BJ (cell line): ENCODE measurements at regions of chr17 and their contacts with region 1.

Region 1: DNA sequence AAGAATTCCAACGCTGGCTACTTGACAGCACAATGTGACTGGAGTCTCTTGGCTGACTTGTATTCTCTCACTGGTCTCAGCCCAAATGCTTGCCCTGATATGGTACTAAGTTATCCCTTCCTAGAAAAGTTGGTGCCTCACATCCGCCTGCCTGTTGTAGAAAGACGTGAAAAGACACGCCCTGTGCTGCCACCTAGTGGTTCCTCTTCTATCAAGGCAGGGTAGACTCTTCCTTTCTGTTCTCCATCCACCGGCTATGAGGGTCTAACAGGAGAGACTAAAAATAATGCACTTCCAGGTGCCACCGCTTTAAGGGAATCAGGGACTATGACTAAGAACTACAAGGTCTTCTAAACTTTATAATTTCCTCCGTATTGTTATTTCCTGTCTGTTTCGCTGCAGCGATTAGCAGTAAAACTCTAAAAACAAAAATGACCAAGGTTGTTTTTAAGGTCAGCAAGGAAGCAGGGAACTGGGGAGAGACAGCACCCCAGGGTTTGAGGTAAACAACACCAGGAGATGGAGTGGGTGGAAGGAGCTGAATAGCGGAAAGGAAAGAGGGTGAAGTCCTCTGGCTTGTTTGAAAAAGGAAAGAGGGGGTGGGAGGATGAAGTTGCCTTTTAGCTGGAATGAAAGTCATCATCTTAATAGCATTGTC is 109.5 kb downstream of the YPEL2 start:
- DNase-seq: no peak
- H3K4me3 ChIP-seq: no peak overlapping the region
- H3K27me3 ChIP-seq: no peaks in the 10 kb centered on the region
- CTCF ChIP-seq: peak; percentile 80

Region 2: DNA sequence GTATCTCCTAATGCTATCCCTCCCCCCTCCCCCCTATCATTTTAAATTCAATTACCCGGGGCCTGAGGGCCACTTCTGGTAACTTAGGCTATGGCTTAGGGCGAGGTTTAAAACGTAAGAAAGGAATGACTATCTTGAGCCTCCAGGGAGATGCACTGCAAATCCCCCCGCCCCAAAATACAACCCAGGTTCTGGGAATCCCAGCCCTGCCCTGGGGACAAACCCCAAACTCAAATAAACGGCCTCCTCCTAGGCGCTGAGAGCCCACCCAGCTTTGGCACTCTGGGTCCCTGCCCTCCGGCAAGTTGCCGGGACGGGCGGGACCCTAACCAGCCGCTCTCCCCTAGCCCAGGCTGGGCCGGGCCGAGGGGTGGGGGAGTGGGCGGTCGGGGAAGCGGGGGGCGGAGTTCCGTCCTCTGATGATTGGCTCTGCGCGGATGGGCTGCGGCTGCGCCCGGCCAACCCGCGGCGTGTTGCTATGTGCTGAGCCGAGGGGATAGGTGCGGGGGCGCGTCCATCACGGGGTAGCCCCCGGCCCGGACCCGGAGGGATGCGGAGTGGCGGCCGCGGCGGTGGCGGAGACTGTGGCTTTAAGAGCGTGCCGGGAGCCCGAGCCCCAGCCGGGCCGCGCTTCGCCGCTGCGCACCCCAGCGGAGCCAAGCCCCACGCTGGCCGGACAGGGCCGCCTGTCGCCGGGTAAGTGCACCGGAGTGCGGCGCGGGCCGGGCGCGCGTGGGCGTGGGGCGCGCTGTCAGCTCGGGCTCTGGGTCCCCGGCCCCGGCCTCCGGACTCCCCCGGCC is 109.6 kb before region 1 on chr17 and contains the start of gene YPEL2:
- CTCF ChIA-PET with region 1: interaction called, 100 read pairs
- POLR2A ChIA-PET with region 1: no interaction called
- DNase-seq: peak; percentile 40
- H3K4me3 ChIP-seq: peak within 1 kb of the TSS; percentile 94
- H3K27me3 ChIP-seq: peaks cover 6% of the 10 kb centered on the region
- CTCF ChIP-seq: no peak
- polyA plus RNA-seq, gene YPEL2: 8.4 and 9.2 TPM in 2 replicates

Region 3: GRCh38 chr17:59427425-59427921 is 13.4 kb before region 1 on chr17:
- CTCF ChIA-PET with region 1: interaction called, 14 read pairs
- POLR2A ChIA-PET with region 1: no interaction called
- DNase-seq: no peak
- H3K4me3 ChIP-seq: no peak overlapping the region
- H3K27me3 ChIP-seq: no peaks in the 10 kb centered on the region
- CTCF ChIP-seq: no peak

Region 4: GRCh38 chr17:59451706-59452105 is 10.8 kb after region 1 on chr17:
- CTCF ChIA-PET with region 1: interaction called, 13 read pairs
- POLR2A ChIA-PET with region 1: no interaction called
- DNase-seq: no peak
- H3K4me3 ChIP-seq: no peak overlapping the region
- H3K27me3 ChIP-seq: no peaks in the 10 kb centered on the region
- CTCF ChIP-seq: no peak